Activated CD4-positive, alpha-beta T cell treated with anti-CD3 and anti-CD28 coated beads for 36 hours (primary cell): ENCODE measurements at regions of chr7 and their contacts with region 1.

Region 1: GRCh38 chr7:27210441-27211083 is 10.7 kb upstream of the HOXA13 start:
- DNase-seq: peak; percentile 77
- ATAC-seq: peak; percentile 70
- H3K4me3 Mint-ChIP-seq: no peak overlapping the region
- H3K27ac Mint-ChIP-seq: no peak overlapping the region
- H3K4me1 Mint-ChIP-seq: peaks cover 15% of the 10 kb centered on the region
- H3K27me3 Mint-ChIP-seq: peaks cover 79% of the 10 kb centered on the region

Region 2: GRCh38 chr7:27223941-27224575 is 13.5 kb after region 1 on chr7:
- CTCF ChIA-PET with region 1: interaction called, 11 read pairs
- POLR2A ChIA-PET with region 1: no interaction called
- intact Hi-C with region 1: no loop called
- DNase-seq: no peak
- ATAC-seq: no peak
- H3K4me3 Mint-ChIP-seq: no peak overlapping the region
- H3K27ac Mint-ChIP-seq: no peak overlapping the region
- H3K4me1 Mint-ChIP-seq: peaks cover 13% of the 10 kb centered on the region
- H3K27me3 Mint-ChIP-seq: peaks cover 70% of the 10 kb centered on the region

Region 3: DNA sequence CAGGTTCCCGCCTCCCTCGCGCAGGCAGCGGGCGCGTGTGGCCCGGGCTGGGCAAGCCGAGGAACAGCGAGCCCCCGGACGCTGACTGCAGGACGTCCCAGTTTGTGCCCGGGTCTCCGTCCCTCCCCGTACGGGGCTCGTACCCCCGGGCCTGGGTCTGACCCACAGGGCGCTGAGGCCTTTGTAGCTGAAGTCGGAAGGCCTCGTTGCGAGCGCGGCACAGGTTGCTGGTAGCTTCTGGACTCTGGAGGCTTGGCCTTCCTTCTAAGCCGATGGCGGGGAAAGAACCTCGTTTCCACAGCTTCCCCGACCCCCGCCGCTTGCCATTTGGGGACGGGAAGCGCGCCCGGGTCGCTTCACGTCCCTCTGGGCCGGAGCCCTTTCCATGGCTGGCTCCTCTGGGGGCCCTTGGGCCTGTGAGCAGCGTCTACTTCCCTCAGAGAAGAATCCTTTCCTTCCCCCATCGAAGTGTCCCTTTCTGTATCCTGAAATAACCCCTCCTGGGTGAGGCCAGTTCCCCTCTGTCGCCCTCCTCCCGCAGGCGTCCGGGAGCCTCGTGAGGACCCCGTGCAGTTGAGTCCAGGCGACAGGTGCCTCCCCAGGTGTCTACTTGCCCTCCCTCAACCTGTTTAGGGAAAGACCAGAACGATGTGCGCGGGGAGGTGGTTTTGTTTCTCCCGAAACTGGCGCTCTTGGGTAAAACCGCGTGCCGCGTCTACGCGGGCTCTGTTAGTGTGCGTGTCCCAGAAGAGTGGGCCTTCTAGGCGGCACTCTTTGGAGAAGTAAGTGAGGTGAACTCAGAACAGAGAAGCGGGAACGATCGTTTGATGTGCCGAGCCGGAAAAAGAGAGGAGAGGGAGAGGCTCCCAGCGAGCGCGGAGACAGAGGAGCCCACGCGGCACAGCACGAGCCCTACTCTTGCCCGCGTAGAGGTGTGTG is 41.4 kb after region 1 on chr7:
- CTCF ChIA-PET with region 1: no interaction called
- POLR2A ChIA-PET with region 1: no interaction called
- intact Hi-C with region 1: loop called in 1 of 2 experiments (anchors 5 kb)
- DNase-seq: no peak
- ATAC-seq: no peak
- H3K4me3 Mint-ChIP-seq: no peak overlapping the region
- H3K27ac Mint-ChIP-seq: no peak overlapping the region
- H3K4me1 Mint-ChIP-seq: peaks cover 10% of the 10 kb centered on the region
- H3K27me3 Mint-ChIP-seq: peaks cover 68% of the 10 kb centered on the region

Region 4: GRCh38 chr7:27576360-27576944 is 365.9 kb after region 1 on chr7:
- CTCF ChIA-PET with region 1: no interaction called
- POLR2A ChIA-PET with region 1: no interaction called
- intact Hi-C with region 1: loop called (anchors 1 to 5 kb)
- DNase-seq: no peak
- ATAC-seq: no peak
- H3K4me3 Mint-ChIP-seq: no peak overlapping the region
- H3K27ac Mint-ChIP-seq: no peak overlapping the region
- H3K4me1 Mint-ChIP-seq: no peaks in the 10 kb centered on the region
- H3K27me3 Mint-ChIP-seq: no peaks in the 10 kb centered on the region

Region 5: GRCh38 chr7:27921081-27921836 is 710.7 kb after region 1 on chr7:
- CTCF ChIA-PET with region 1: interaction called, 6 read pairs
- POLR2A ChIA-PET with region 1: no interaction called
- intact Hi-C with region 1: loop called in 1 of 2 experiments (anchors 1 kb)
- DNase-seq: peak; percentile 32
- ATAC-seq: peak; percentile 44
- H3K4me3 Mint-ChIP-seq: no peak overlapping the region
- H3K27ac Mint-ChIP-seq: no peak overlapping the region
- H3K4me1 Mint-ChIP-seq: no peaks in the 10 kb centered on the region
- H3K27me3 Mint-ChIP-seq: no peaks in the 10 kb centered on the region